Activated T-helper 1 cell treated with anti-CD3 and anti-CD28 coated beads, Interleukin-12 subunit alpha, Interleukin-12 subunit beta, Interleukin-2, Interleukin-4 antibody, amounts not matched to agents 30 ng/mL and 10 ng/mL and 1 ng/mL, durations not matched to agents 14 hours and 24 hours and 36 hours (primary cell): ENCODE measurements at regions of chr2 and their contacts with region 1.

Region 1: DNA sequence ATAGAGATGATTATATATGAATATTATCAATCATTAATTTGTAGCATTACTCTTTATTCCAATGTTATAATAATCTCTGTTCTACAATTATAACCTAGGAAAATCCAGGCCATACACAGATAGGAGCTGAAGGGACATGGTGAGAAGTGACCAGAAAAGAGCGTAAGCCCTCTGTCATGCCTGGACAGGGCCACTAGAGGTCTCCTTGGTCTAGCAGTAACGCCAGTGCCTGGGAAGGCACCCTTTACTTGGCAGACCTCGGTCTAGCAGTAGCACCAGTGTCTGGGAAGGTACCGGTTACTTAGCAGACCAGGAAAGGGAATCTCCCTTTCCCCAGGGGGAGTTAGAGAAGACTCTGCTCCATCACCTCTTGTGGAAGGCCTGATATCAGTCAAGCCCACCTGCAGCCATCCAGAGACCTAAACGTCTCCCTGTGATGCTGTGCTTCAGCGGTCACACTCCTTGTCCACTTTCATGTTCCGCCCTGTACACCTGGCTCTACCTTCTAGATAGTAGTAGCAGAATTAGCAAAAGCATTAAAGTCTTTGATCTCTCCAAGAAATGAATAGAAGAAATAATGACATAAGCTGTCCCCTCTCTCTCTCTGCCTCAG is 447.5 kb upstream of the FSIP2 start:
- DNase-seq: no peak
- H3K4me3 Mint-ChIP-seq: no peak overlapping the region
- H3K27ac Mint-ChIP-seq: no peak overlapping the region
- H3K4me1 Mint-ChIP-seq: no peaks in the 10 kb centered on the region
- H3K27me3 Mint-ChIP-seq: no peaks in the 10 kb centered on the region

Region 2: GRCh38 chr2:185127412-185127811 is 163.7 kb before region 1 on chr2:
- intact Hi-C with region 1: no loop called
- DNase-seq: no peak
- H3K4me3 Mint-ChIP-seq: no peak overlapping the region
- H3K27ac Mint-ChIP-seq: no peak overlapping the region
- H3K4me1 Mint-ChIP-seq: no peaks in the 10 kb centered on the region
- H3K27me3 Mint-ChIP-seq: no peaks in the 10 kb centered on the region

Region 3: GRCh38 chr2:185738679-185739472 is 447.7 kb after region 1 on chr2 and contains the start of gene FSIP2:
- intact Hi-C with region 1: loop called (anchors 2 kb)
- DNase-seq: peak; percentile 9
- H3K4me3 Mint-ChIP-seq: no peak within 1 kb of the TSS
- H3K27ac Mint-ChIP-seq: no peak within 1 kb of the TSS
- H3K4me1 Mint-ChIP-seq: no peaks in the 10 kb centered on the region
- H3K27me3 Mint-ChIP-seq: peaks cover 3% of the 10 kb centered on the region
- total RNA-seq, gene FSIP2: 0.23 TPM in 1 of 2 replicates, not detected in the other